ENCODE measurements at regions of chr10 and their contacts with region 1.

Region 1: GRCh38 chr10:19468413-19468812 is 347.8 kb upstream of the PLXDC2 start:
- DNase-seq: no peak
- H3K27ac ChIP-seq: no peak overlapping the region
- CTCF ChIP-seq: no peak

Region 2: DNA sequence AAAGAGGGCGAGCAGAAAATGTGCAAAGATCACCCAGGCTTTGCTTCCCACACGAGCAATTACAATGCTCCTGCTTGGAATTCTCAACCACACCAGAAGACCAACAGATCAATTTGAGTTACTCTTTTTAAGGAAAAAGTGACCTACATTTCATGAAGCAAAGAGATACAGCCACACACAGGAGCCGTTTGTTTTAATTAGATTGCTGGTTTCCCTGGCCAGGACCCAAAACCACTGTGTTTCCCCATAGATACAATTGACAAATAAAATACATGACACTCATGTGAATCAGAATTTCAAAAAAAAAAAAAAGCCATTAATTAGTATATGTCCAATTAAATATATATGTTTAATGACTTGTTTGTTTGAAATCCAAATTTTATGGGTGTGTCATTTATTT is 806.2 kb after region 1 on chr10:
- CTCF ChIA-PET with region 1: no interaction called
- POLR2A ChIA-PET with region 1: interaction called, 12 read pairs
- DNase-seq: no peak
- H3K27ac ChIP-seq: no peak overlapping the region
- CTCF ChIP-seq: no peak